Activated B cell treated with CpG ODN at 0.5 μM for 24 hours (primary cell): ENCODE measurements at regions of chr3 and their contacts with region 1.

Region 1: GRCh38 chr3:42635111-42635510 is 18.4 kb upstream of the ZBTB47 start:
- DNase-seq: no peak
- ATAC-seq: peak; percentile 88
- H3K4me3 Mint-ChIP-seq: no peak overlapping the region
- H3K27ac Mint-ChIP-seq: no peak overlapping the region
- H3K4me1 Mint-ChIP-seq: peaks cover 3% of the 10 kb centered on the region
- H3K27me3 Mint-ChIP-seq: no peaks in the 10 kb centered on the region
- CTCF ChIP-seq: no peak

Region 2: DNA sequence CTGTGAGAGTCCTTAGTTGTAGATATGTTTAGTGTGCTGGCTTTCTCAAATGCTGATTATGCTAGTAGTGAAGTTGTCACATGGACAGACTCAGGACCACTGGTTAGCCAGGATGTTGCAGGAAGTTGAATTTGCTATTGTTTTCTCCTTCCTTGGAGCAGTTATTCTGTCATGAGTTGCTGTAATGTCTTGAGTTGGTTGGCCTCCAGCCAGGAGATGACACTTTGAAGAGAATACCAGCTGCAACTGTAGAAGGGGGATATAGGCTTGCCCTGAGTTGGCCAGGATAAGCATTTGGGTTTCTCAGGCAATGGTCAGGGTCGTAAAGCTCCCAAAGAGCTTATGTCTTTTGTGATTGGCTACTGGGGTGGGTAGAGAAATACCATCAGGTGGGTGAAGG is 1903.7 kb before region 1 on chr3:
- CTCF ChIA-PET with region 1: no interaction called
- POLR2A ChIA-PET with region 1: no interaction called
- intact Hi-C with region 1: no loop called
- DNase-seq: no peak
- ATAC-seq: no peak
- H3K4me3 Mint-ChIP-seq: no peak overlapping the region
- H3K27ac Mint-ChIP-seq: no peak overlapping the region
- H3K4me1 Mint-ChIP-seq: no peaks in the 10 kb centered on the region
- H3K27me3 Mint-ChIP-seq: no peaks in the 10 kb centered on the region
- CTCF ChIP-seq: no peak

Region 3: DNA sequence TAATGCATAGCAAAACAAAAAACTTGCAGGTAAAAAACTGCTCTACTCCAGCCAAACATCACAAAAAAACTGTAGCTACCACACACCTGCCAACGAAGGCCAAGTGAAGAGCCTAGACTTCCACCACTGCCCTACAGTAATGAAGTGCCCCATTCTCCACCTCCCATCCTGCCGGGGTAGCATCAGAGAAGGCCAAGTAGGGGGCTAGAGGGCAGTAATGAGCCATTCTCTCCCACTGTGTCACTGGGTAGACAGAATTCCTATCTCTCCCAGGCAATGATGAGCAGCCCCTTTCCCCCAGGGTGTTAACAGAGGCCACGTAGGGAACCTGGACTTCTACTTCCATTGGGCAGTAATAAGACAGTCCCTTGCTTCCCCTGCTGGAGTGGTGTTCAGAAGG is 62.8 kb before region 1 on chr3:
- CTCF ChIA-PET with region 1: interaction called, 3 read pairs
- POLR2A ChIA-PET with region 1: no interaction called
- intact Hi-C with region 1: loop called (anchors 2 kb)
- DNase-seq: no peak
- ATAC-seq: no peak
- H3K4me3 Mint-ChIP-seq: no peak overlapping the region
- H3K27ac Mint-ChIP-seq: no peak overlapping the region
- H3K4me1 Mint-ChIP-seq: peaks cover 4% of the 10 kb centered on the region
- H3K27me3 Mint-ChIP-seq: no peaks in the 10 kb centered on the region
- CTCF ChIP-seq: no peak

Region 4: GRCh38 chr3:42600111-42600988 is 34.8 kb before region 1 on chr3 and contains the start of gene NKTR:
- CTCF ChIA-PET with region 1: interaction called, 3 read pairs
- POLR2A ChIA-PET with region 1: interaction called, 3 read pairs
- intact Hi-C with region 1: loop called (anchors 5 kb)
- DNase-seq: peak; percentile 98
- ATAC-seq: peak; percentile 92
- H3K4me3 Mint-ChIP-seq: peak within 1 kb of the TSS; percentile 91
- H3K27ac Mint-ChIP-seq: peak within 1 kb of the TSS; percentile 96
- H3K4me1 Mint-ChIP-seq: peaks cover 34% of the 10 kb centered on the region
- H3K27me3 Mint-ChIP-seq: no peaks in the 10 kb centered on the region
- CTCF ChIP-seq: no peak
- total RNA-seq, gene NKTR: 107 and 126 TPM in 2 replicates